Activated CD4-positive, alpha-beta T cell treated with anti-CD3 and anti-CD28 coated beads for 36 hours (primary cell): ENCODE measurements at regions of chr6 and their contacts with region 1.

Region 1: DNA sequence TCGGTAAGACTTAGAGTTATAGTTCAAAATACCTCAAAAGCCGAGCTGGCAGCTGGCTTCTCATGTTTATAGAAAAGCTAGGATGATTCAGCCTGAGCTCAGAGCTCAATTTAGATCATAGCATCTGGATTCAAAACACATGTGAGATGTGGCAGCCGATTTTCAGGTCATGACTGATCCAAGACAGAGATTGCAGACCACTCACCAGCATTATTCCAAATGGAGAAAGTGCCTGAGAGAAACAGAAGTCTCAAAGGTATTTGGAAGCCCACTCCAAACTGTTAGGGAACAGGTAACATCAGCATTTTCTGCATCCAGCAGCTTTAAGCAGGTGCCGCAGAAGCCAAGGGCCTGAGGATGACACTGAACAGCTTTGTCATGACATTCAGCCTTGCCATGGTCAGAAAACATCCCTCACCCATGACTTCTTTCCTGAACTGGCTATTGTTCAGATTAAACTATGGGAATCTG is 102.2 kb downstream of the BACH2 start:
- DNase-seq: peak; percentile 53
- ATAC-seq: peak; percentile 42
- H3K4me3 Mint-ChIP-seq: peak overlapping the region; percentile 5
- H3K27ac Mint-ChIP-seq: peak overlapping the region; percentile 88
- H3K4me1 Mint-ChIP-seq: peaks cover 93% of the 10 kb centered on the region
- H3K27me3 Mint-ChIP-seq: no peaks in the 10 kb centered on the region

Region 2: GRCh38 chr6:90238496-90239266 is 44.3 kb after region 1 on chr6:
- CTCF ChIA-PET with region 1: no interaction called
- POLR2A ChIA-PET with region 1: no interaction called
- intact Hi-C with region 1: loop called (anchors 2 kb)
- DNase-seq: no peak
- ATAC-seq: no peak
- H3K4me3 Mint-ChIP-seq: peak overlapping the region; percentile 10
- H3K27ac Mint-ChIP-seq: peak overlapping the region; percentile 73
- H3K4me1 Mint-ChIP-seq: peaks cover 87% of the 10 kb centered on the region
- H3K27me3 Mint-ChIP-seq: no peaks in the 10 kb centered on the region